Endothelial cell of umbilical vein (primary cell): ENCODE measurements at regions of chr2 and their contacts with region 1.

Region 1: DNA sequence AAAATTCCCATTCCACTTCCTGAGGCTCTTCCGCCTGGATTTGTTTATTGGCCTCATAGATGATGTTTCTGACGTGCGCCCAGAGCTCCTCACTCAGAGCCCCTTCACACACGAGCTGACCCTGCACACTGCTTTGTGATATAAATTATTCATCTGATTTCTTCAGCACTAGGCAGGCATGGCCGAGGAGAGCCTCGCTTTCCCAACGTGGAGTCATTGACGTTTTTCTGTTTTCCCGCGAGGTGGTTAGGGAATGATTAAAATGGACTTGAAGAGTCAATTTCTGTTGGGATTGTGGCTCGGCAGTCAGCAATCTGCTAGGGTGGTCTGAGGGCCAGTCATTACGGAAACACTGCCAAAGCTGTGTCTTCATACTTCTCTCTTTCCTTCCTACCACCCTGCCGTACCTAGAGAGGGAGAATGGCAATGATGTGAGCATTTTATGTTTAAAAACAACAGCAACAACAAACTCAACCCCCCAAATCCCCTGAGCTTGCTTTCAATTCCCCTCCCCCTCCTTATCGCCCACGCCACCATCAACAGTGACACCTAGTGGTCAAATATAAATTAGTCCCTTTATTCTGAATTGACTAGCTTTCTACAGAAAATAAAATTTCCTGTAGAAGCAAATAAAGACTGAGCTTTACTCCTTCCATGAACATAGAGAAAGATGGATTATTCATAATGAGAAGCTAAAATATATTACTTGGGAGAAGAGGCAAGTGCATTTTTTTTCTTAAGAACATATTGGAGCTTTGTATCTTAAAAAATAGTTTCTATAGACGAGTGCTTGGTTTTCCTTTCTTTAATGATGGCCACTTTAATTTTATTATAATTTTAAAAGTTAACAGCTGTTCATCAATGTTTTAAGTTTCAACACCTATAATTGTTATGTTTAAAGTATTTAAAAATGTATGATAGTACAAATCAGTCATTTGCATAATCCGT is 285.1 kb downstream of the MTX2 start:
- DNase-seq: peak; percentile 89
- H3K4me3 ChIP-seq: peak overlapping the region; percentile 11 to 48 (median 44)
- H3K27ac ChIP-seq: peak overlapping the region; percentile 77
- H3K4me1 ChIP-seq: peaks cover 13% of the 10 kb centered on the region
- H3K27me3 ChIP-seq: no peaks in the 10 kb centered on the region
- CTCF ChIP-seq: peak; percentile 47 to 65
- POLR2A ChIP-seq: no peak

Region 2: GRCh38 chr2:176161819-176162626 is 392.4 kb before region 1 on chr2:
- CTCF ChIA-PET with region 1: interaction called, 14 read pairs
- POLR2A ChIA-PET with region 1: no interaction called
- dilution Hi-C with region 1: no loop called
- intact Hi-C with region 1: no loop called
- DNase-seq: no peak
- H3K4me3 ChIP-seq: no peak overlapping the region
- H3K27ac ChIP-seq: no peak overlapping the region
- H3K4me1 ChIP-seq: peaks cover 3% of the 10 kb centered on the region
- H3K27me3 ChIP-seq: peaks cover 5 to 15% of the 10 kb centered on the region in 2 experiments
- CTCF ChIP-seq: no peak
- POLR2A ChIP-seq: no peak

Region 3: GRCh38 chr2:176280867-176281658 is 273.3 kb before region 1 on chr2:
- CTCF ChIA-PET with region 1: interaction called, 5 read pairs
- POLR2A ChIA-PET with region 1: no interaction called
- dilution Hi-C with region 1: no loop called
- intact Hi-C with region 1: loop called (anchors 5 kb)
- DNase-seq: no peak
- H3K4me3 ChIP-seq: no peak overlapping the region
- H3K27ac ChIP-seq: no peak overlapping the region
- H3K4me1 ChIP-seq: peaks cover 19% of the 10 kb centered on the region
- H3K27me3 ChIP-seq: no peaks in the 10 kb centered on the region
- CTCF ChIP-seq: no peak
- POLR2A ChIP-seq: no peak

Region 4: GRCh38 chr2:176518823-176519222 is 35.6 kb before region 1 on chr2:
- CTCF ChIA-PET with region 1: interaction called, 28 read pairs
- POLR2A ChIA-PET with region 1: interaction called, 3 read pairs
- dilution Hi-C with region 1: no loop called
- intact Hi-C with region 1: loop called (anchors 1 kb)
- DNase-seq: peak; percentile 98
- H3K4me3 ChIP-seq: no peak overlapping the region
- H3K27ac ChIP-seq: peak overlapping the region; percentile 64
- H3K4me1 ChIP-seq: peaks cover 36% of the 10 kb centered on the region
- H3K27me3 ChIP-seq: no peaks in the 10 kb centered on the region
- CTCF ChIP-seq: peak in 1 of 2 donors; percentile 12
- POLR2A ChIP-seq: peak; percentile 31

Region 5: DNA sequence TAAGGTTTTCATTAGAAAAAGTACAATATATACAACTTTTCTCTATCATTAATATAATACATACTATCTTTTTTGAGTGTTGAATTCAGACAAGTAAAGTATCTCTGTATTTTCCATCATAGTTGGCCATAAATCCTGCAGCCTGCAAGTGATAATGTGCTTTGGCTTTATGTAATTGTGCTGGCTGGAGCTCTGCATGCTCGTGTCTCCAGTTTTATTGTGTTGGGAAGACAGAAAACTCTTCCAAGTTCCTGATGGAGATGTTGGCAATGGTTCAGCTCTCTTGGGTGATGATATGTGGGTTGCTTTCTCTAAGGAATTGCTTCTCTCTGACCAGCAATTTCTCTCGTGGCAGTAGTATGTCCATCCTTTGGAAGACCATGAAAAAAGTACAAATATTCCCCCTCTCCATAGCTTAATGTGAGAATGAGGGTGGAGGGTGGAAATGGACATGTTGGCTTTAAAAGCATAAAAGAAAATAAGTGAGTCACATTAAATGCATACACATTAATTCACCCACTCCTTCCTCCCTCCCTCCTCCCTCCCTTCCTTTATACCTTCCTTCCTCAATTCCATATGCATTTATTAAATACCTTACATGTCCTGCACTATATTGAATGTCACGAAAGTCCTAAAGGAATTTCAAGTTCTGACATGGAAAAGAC is 59.1 kb after region 1 on chr2:
- CTCF ChIA-PET with region 1: interaction called, 15 read pairs
- POLR2A ChIA-PET with region 1: no interaction called
- dilution Hi-C with region 1: no loop called
- intact Hi-C with region 1: no loop called
- DNase-seq: peak; percentile 80
- H3K4me3 ChIP-seq: peak overlapping the region in 1 of 3 experiments; percentile 41
- H3K27ac ChIP-seq: peak overlapping the region; percentile 32
- H3K4me1 ChIP-seq: peaks cover 34% of the 10 kb centered on the region
- H3K27me3 ChIP-seq: no peaks in the 10 kb centered on the region
- CTCF ChIP-seq: no peak
- POLR2A ChIP-seq: no peak

Region 6: GRCh38 chr2:176814306-176815052 is 260.1 kb after region 1 on chr2:
- CTCF ChIA-PET with region 1: interaction called, 8 read pairs
- POLR2A ChIA-PET with region 1: no interaction called
- dilution Hi-C with region 1: no loop called
- intact Hi-C with region 1: loop called (anchors 10 kb)
- DNase-seq: peak; percentile 38
- H3K4me3 ChIP-seq: no peak overlapping the region
- H3K27ac ChIP-seq: no peak overlapping the region
- H3K4me1 ChIP-seq: no peaks in the 10 kb centered on the region
- H3K27me3 ChIP-seq: peaks cover 0 to 9% of the 10 kb centered on the region in 2 experiments
- CTCF ChIP-seq: peak; percentile 16 to 17
- POLR2A ChIP-seq: no peak